ENCODE measurements at regions of chr22 and their contacts with region 1.

Region 1: DNA sequence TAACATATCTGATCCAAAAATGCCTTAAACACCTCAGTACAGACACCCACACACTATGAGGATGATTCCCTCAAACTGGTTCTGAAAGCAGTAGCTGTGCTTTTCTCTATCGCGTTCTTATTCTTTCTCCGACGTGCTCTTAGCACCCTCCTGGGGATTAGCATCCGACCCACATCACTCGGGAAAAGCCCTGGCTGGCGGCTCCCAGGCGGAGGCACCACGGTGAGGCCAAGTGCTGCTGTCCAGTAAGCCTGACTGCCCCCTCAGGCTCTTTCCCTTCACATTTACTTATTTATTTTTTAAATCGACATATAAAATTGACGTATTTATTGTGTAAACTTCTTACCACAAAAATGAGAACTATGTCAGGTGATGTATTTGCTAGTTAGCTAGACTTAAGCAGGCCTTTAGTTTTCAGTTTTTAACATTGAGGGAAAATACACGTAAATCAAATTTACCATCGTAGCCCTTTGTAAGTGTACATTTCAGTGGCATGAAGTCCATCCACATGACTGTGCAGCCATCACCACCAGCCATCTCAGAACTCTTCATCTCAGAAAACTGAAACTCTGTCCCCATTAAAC is 19.2 kb downstream of the TBX1 start:
- DNase-seq: no peak
- ATAC-seq: no peak
- H3K4me3 Mint-ChIP-seq: no peak overlapping the region
- H3K27ac Mint-ChIP-seq: no peak overlapping the region
- H3K4me1 Mint-ChIP-seq: peaks cover 8% of the 10 kb centered on the region
- H3K27me3 Mint-ChIP-seq: peaks cover 9% of the 10 kb centered on the region

Region 2: GRCh38 chr22:19543970-19544708 is 235.6 kb before region 1 on chr22:
- CTCF ChIA-PET with region 1: no interaction called
- POLR2A ChIA-PET with region 1: no interaction called
- intact Hi-C with region 1: loop called in 1 of 2 experiments (anchors 10 kb)
- DNase-seq: no peak
- ATAC-seq: no peak
- H3K4me3 Mint-ChIP-seq: no peak overlapping the region
- H3K27ac Mint-ChIP-seq: no peak overlapping the region
- H3K4me1 Mint-ChIP-seq: no peaks in the 10 kb centered on the region
- H3K27me3 Mint-ChIP-seq: peaks cover 2% of the 10 kb centered on the region

Region 3: DNA sequence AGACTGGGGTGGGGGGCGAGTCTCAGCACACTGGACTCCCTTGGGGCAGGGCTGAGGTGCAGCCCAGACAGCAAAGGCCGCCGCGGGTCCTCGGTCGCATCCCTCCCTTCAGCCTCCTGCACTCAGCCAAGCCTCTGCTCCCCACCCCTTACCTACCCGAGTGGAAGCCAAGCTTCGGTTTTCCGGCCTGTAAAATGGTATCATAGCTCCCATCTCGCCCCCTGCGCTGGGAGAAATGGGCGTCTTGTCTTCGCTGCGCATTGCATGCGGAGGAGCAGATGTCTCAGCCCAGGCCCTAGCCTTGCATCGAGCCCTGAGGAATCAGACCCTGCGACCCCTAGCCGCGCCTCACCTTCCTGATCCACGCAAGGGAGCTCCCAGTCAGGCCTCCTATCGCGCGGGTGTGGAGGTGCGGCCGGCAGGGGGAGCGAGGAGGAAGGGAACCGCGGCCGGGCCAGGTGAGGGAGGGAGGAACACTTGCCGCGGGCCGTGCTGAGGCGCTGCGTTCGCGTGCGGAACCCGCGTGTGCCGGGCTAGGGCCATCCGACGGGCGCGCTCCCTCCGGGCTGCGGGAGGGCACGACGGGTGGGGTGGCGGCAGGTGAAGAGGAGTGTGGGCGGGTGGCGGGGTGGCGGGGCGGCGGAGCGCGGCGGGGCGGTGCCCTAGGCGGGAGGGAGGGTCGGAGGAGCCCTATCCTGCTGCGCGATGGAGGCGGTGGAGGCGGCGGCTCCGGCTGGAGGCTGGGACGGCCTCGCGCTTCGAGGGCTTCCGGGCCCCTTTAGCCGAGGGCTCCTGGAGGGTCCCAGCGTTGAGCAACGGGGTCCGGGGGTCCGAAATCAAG is 23.3 kb before region 1 on chr22:
- CTCF ChIA-PET with region 1: no interaction called
- POLR2A ChIA-PET with region 1: no interaction called
- intact Hi-C with region 1: no loop called
- DNase-seq: peak; percentile 83
- ATAC-seq: peak; percentile 73
- H3K4me3 Mint-ChIP-seq: peak overlapping the region; percentile 32
- H3K27ac Mint-ChIP-seq: no peak overlapping the region
- H3K4me1 Mint-ChIP-seq: peaks cover 25% of the 10 kb centered on the region
- H3K27me3 Mint-ChIP-seq: peaks cover 46% of the 10 kb centered on the region

Region 4: DNA sequence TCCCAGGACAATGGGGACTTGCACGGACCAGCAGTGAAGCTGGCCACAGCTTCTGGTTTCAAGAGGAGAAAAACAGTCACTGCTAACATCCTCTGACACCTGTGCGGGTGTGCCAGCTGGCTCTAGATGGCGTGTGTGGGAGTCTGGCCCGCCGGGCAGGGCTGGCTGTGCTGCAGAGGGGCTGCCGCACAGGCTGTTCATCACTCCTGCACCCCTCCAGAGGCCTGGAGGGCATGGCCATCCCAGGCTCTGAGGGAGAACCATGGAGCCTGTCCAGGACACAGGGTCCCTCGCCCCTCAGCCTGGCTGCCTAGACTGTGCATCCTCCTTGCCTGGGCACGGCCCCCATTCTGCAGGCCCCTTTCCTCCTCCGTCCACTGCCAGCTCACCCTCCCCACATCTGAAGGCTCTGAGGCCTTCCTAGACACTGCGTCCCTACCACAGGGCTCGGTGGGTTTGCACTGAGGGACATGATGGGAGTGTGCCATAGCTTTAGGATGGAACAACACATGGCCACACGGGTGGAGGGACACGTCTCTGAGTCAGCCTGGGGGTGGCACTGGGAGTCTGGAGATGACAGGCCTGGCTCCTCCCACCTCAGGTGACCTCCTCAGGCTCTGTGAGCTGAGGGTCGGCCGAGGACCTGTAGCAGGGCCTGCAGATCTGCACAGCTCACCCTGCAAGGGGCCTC is 117.0 kb after region 1 on chr22:
- CTCF ChIA-PET with region 1: no interaction called
- POLR2A ChIA-PET with region 1: no interaction called
- intact Hi-C with region 1: no loop called
- DNase-seq: peak; percentile 66
- ATAC-seq: peak; percentile 21
- H3K4me3 Mint-ChIP-seq: no peak overlapping the region
- H3K27ac Mint-ChIP-seq: no peak overlapping the region
- H3K4me1 Mint-ChIP-seq: peaks cover 55% of the 10 kb centered on the region
- H3K27me3 Mint-ChIP-seq: no peaks in the 10 kb centered on the region

Region 5: DNA sequence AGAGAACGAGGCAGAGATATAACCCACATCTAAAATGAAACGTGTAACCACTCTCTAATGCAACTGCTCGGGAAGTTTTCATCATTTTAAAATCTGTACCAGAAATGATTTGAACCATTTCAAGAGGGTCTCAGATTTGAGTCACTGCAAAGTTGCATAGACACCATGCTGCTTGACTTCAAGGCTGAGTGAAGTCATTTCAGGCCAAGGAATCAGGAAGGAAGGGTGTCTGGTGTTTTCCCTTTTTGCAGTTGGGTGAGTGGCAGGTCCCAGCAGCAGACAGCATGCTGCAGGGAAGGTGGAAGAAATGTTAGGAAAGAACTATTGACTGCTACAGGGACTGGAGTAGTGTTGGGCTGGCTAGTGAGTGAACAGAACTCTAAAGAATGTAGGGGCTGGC is 257.6 kb after region 1 on chr22:
- CTCF ChIA-PET with region 1: no interaction called
- POLR2A ChIA-PET with region 1: no interaction called
- intact Hi-C with region 1: no loop called
- DNase-seq: peak; percentile 24
- ATAC-seq: peak; percentile 85
- H3K4me3 Mint-ChIP-seq: no peak overlapping the region
- H3K27ac Mint-ChIP-seq: peak overlapping the region; percentile 67
- H3K4me1 Mint-ChIP-seq: peaks cover 17% of the 10 kb centered on the region
- H3K27me3 Mint-ChIP-seq: no peaks in the 10 kb centered on the region

Measured in activated CD4-positive, alpha-beta T cell treated with anti-CD3 and anti-CD28 coated beads for 36 hours (primary cell).